Activated CD4-positive, alpha-beta T cell treated with anti-CD3 and anti-CD28 coated beads for 36 hours (primary cell): ENCODE measurements at regions of chr5 and their contacts with region 1.

Region 1: DNA sequence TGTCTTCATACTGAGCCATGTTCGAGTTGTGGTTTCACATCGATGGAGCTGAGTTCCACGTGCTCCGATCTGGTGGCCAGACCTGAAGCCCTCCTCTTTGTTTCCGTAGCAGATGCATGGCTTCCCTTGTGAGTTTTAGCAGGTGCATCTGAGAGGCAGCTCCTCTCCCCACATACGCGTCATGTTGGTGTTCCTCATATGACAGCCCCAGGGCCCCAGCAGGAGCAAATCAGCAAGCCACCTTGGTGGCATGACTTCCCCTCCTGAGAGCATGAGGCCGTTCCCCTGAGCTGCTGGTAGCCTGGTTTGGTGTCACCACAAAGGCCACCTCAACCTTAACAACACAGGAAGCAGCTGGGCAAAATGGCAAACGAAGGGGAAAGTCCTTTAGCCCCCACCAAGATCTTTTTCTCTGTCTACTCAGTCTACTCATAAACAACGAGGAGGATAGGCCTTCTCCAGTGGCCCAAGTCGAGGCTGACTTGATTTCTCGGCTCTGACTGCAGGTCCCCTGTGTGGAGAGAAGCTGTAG is 5.9 kb downstream of the CYFIP2 start:
- DNase-seq: peak; percentile 95
- ATAC-seq: peak; percentile 82
- H3K4me3 Mint-ChIP-seq: peak overlapping the region; percentile 96
- H3K27ac Mint-ChIP-seq: peak overlapping the region; percentile 97
- H3K4me1 Mint-ChIP-seq: peaks cover 84% of the 10 kb centered on the region
- H3K27me3 Mint-ChIP-seq: no peaks in the 10 kb centered on the region

Region 2: GRCh38 chr5:156920042-156920860 is 351.6 kb before region 1 on chr5:
- CTCF ChIA-PET with region 1: no interaction called
- POLR2A ChIA-PET with region 1: interaction called, 3 read pairs
- intact Hi-C with region 1: loop called in 1 of 2 experiments (anchors 2 kb)
- DNase-seq: peak; percentile 84
- ATAC-seq: peak; percentile 75
- H3K4me3 Mint-ChIP-seq: peak overlapping the region; percentile 58
- H3K27ac Mint-ChIP-seq: peak overlapping the region; percentile 97
- H3K4me1 Mint-ChIP-seq: peaks cover 52% of the 10 kb centered on the region
- H3K27me3 Mint-ChIP-seq: no peaks in the 10 kb centered on the region

Region 3: DNA sequence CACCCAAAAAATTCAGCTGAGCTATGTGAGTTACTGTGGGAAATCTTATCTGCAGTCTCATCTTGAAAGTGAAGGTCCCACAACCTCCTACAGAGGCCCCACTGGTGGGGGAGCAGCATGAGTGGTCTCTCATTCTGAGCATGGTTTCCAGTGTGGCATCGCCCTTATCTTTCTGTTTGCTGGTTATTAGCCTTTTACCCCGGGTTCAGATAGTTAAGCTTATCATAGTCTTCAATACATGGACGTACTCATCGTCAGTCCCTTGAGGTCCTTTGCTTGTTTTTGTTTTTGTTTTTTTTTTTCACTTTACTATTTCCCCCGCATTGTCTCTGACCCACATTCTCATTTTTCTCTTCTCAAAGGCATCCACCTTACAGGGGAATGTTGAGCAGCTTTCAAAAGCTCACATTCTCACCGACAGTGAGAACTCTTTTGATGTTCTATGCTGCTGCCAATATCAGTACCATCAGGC is 155.3 kb before region 1 on chr5:
- CTCF ChIA-PET with region 1: no interaction called
- POLR2A ChIA-PET with region 1: no interaction called
- intact Hi-C with region 1: no loop called
- DNase-seq: peak; percentile 58
- ATAC-seq: peak; percentile 83
- H3K4me3 Mint-ChIP-seq: no peak overlapping the region
- H3K27ac Mint-ChIP-seq: peak overlapping the region; percentile 80
- H3K4me1 Mint-ChIP-seq: peaks cover 29% of the 10 kb centered on the region
- H3K27me3 Mint-ChIP-seq: no peaks in the 10 kb centered on the region

Region 4: DNA sequence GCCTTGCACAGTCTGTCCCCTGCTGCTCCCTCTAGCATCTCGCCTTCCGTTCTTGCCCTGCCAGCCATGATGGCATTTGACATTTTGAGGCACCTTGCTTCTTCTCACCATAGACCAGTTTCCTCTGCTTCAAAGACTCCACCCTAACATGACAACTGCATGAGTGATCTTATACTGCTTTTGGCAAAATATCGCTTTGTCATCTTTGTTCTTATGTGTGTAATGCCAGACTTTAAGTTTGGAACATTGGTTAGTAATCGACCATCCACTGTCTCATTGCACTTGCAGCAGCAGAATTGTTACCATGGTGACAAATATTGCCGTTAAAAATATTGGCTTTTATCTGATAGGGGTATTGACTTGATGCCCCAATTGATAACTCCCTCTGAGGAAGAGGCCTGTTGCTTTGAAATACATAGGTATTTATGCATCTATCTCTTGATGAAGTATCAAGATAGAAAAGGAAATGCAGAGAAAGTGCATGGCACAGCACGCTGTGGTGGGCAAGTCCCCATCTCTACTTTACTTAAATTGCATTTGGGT is 112.5 kb before region 1 on chr5:
- CTCF ChIA-PET with region 1: interaction called, 3 read pairs
- POLR2A ChIA-PET with region 1: no interaction called
- intact Hi-C with region 1: loop called in 1 of 2 experiments (anchors 5 kb)
- DNase-seq: peak; percentile 66
- ATAC-seq: peak; percentile 81
- H3K4me3 Mint-ChIP-seq: peak overlapping the region; percentile 64
- H3K27ac Mint-ChIP-seq: peak overlapping the region; percentile 99
- H3K4me1 Mint-ChIP-seq: peaks cover 71% of the 10 kb centered on the region
- H3K27me3 Mint-ChIP-seq: no peaks in the 10 kb centered on the region

Region 5: GRCh38 chr5:157189223-157189622 is 82.6 kb before region 1 on chr5:
- CTCF ChIA-PET with region 1: interaction called, 3 read pairs
- POLR2A ChIA-PET with region 1: interaction called, 12 read pairs
- intact Hi-C with region 1: loop called in 1 of 2 experiments (anchors 2 kb)
- DNase-seq: peak; percentile 71
- ATAC-seq: peak; percentile 59
- H3K4me3 Mint-ChIP-seq: peak overlapping the region; percentile 93
- H3K27ac Mint-ChIP-seq: peak overlapping the region; percentile 96
- H3K4me1 Mint-ChIP-seq: peaks cover 75% of the 10 kb centered on the region
- H3K27me3 Mint-ChIP-seq: no peaks in the 10 kb centered on the region

Region 6: GRCh38 chr5:157253547-157253946 is 18.3 kb before region 1 on chr5:
- CTCF ChIA-PET with region 1: interaction called, 33 read pairs
- POLR2A ChIA-PET with region 1: interaction called, 10 read pairs
- intact Hi-C with region 1: loop called in 1 of 2 experiments (anchors 1 kb)
- DNase-seq: no peak
- ATAC-seq: no peak
- H3K4me3 Mint-ChIP-seq: peak overlapping the region; percentile 10
- H3K27ac Mint-ChIP-seq: peak overlapping the region; percentile 89
- H3K4me1 Mint-ChIP-seq: peaks cover 96% of the 10 kb centered on the region
- H3K27me3 Mint-ChIP-seq: no peaks in the 10 kb centered on the region

Region 7: GRCh38 chr5:157290981-157291711 is 19.3 kb after region 1 on chr5:
- CTCF ChIA-PET with region 1: interaction called, 3 read pairs
- POLR2A ChIA-PET with region 1: interaction called, 4 read pairs
- intact Hi-C with region 1: loop called (anchors 1 to 2 kb)
- DNase-seq: peak; percentile 74
- ATAC-seq: peak; percentile 76
- H3K4me3 Mint-ChIP-seq: no peak overlapping the region
- H3K27ac Mint-ChIP-seq: peak overlapping the region; percentile 70
- H3K4me1 Mint-ChIP-seq: peaks cover 66% of the 10 kb centered on the region
- H3K27me3 Mint-ChIP-seq: no peaks in the 10 kb centered on the region

Region 8: GRCh38 chr5:157312492-157312891 is 40.7 kb after region 1 on chr5:
- CTCF ChIA-PET with region 1: interaction called, 5 read pairs
- POLR2A ChIA-PET with region 1: interaction called, 6 read pairs
- intact Hi-C with region 1: loop called (anchors 5 kb)
- DNase-seq: peak; percentile 76
- ATAC-seq: peak; percentile 95
- H3K4me3 Mint-ChIP-seq: no peak overlapping the region
- H3K27ac Mint-ChIP-seq: peak overlapping the region; percentile 83
- H3K4me1 Mint-ChIP-seq: peaks cover 36% of the 10 kb centered on the region
- H3K27me3 Mint-ChIP-seq: no peaks in the 10 kb centered on the region

Region 9: DNA sequence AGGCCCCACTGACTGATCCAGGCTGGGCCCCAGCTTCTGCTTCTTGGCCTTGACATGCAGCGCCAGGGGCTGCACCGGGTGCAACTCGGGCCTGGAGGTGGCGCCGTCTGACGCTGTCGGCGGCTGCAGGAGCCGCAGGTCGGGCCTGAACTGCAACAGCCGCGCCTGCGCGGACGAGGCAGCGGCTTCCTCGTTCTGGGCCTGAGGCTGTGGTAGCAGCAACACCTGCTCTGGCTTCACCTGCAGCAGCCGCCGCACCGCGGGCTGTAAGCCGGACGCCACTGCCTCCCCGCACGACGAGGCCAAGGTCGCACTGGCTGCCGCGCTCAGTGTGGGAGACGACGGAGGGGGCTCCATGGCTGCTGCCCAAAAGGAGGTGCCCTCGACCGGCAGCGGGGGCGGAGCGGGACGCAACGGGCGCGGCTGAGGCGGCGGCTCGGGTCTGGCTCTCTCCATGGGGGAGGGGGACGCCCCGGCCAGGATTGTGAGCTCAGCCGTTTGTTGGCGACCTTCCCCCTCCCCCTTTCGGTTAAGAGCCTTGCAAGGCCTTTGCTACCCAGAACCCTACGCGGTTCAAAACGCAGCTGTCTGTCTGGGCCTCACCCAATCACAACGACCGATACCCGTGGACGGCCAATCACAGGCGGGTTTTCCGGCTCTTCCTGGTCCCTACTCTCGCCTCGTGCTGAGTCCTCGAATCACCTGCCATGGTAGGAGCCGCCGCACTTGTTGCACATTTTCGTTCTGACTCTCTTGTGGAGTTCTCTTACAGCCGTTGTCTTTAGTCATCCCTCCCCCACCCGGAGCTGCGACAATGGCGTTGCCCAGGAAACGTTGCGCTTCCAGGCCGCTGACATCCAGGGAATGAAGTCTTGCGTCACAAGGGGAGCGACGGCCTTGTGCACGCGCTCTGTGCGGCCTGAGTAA is 380.1 kb after region 1 on chr5 and contains the start of gene SOX30:
- CTCF ChIA-PET with region 1: no interaction called
- POLR2A ChIA-PET with region 1: no interaction called
- intact Hi-C with region 1: no loop called
- DNase-seq: peak; percentile 92
- ATAC-seq: peak; percentile 99
- H3K4me3 Mint-ChIP-seq: peak within 1 kb of the TSS; percentile 69
- H3K27ac Mint-ChIP-seq: peak within 1 kb of the TSS; percentile 83
- H3K4me1 Mint-ChIP-seq: peaks cover 15% of the 10 kb centered on the region
- H3K27me3 Mint-ChIP-seq: no peaks in the 10 kb centered on the region
- total RNA-seq, gene SOX30: 0.18 to 0.44 TPM